Ovary (tissue), 10 donors: ENCODE measurements at regions of chr16 and their contacts with region 1.

Region 1: DNA sequence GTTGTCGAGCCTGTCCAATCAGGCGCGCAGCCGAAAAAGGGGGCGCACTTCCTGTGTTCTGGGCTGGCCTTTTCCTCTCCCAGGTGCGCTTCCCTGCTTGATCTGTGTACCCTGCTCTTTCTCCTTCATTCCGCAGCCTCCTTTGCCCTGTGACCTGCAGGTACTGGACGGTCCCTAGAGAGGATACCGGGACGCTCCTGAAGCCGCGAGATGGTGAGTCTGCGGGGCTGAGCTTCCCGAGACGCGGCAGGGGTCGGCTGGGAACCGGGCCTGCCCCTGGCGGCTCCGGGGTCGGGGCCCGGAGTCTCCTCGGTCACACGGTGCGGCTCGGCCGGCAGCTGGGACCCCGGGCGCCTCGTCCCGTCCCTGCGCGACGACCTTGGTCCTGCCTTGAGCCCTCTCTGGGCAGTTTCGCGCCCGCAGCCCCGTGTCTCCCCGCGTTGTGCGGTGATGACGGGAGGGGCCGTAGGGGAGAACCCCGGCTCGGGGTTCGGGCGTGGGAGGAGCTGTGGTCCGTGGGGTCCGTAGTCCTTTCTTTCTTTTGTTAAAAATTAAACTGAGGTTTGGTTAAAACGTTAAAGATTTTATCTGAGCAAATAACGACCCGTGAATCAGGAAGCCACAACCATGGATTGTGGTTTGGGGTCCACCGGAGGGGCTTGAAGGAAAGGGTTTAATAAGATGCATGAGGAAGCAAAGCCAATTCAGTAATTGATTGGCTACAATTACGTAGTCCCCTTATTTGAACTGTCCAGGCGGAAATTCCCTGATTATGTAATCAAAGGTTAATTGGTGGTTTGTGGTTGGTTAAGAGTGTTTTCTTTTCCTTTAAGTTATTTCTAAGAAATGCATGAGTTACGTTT is 172.8 kb upstream of the ZNF267 start:
- DNase-seq: peak; percentile 79 to 88 (median 84)
- H3K4me3 ChIP-seq: peak overlapping the region; percentile 78
- H3K27ac ChIP-seq: peak overlapping the region in 1 of 2 donors; percentile 49
- H3K4me1 ChIP-seq: no peaks in the 10 kb centered on the region
- H3K27me3 ChIP-seq: no peaks in the 10 kb centered on the region
- CTCF ChIP-seq: no peak
- EP300 ChIP-seq: no peak
- POLR2A ChIP-seq: no peak

Region 2: DNA sequence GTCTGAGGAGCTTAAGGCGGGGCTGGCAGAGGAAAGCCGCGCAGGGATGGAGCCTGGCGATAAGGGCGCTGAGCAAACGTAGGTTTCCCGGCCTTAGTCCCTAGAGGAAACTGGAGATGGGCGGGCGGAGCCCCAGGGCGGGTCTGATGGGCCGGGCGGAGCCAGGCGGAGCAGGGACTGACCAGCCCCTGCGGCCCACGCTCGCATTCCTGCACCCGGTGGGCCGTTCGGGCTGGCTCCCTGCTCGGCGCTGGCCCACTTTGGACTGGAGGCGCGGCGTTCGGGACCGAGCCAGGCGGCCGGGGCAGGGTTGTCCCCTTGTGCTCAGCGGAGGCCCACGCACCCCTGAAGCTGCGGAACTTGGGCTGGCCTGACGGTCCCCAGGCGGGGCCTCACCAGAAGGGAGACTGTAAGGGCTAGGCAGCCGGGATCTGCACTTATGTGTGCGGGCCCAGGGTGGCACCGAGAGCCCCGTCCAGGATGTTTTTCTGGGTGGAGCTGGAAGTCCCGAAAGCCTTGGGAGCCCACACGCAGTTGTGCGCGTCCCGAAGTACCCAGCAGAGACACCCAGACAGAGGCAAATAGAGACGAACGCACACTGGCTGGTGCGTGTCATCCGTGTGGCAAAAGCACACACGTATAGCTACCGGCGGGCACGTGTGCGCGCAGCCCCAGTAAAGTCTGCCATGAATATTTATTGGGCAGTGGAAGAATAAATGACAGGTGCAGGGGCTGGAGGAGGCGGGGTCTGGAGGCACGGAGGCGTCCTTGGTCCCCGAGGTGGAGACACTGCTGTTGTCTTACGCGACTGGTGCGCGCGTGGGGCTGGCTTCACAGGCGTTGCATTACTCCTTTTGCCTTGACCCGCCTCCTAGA is 485.2 kb before region 1 on chr16:
- intact Hi-C with region 1: loop called in 1 of 4 experiments (anchors 10 kb)
- DNase-seq: peak in 3 of 5 donors; percentile 21 to 63 (median 44)
- H3K4me3 ChIP-seq: peak overlapping the region; percentile 31
- H3K27ac ChIP-seq: no peak overlapping the region
- H3K4me1 ChIP-seq: peaks cover 14% of the 10 kb centered on the region
- H3K27me3 ChIP-seq: no peaks in the 10 kb centered on the region
- CTCF ChIP-seq: no peak
- EP300 ChIP-seq: no peak
- POLR2A ChIP-seq: no peak